ENCODE measurements at regions of chr2 and their contacts with region 1.

Region 1: GRCh38 chr2:158936978-158937377 is 31.5 kb upstream of the TANC1 start:
- DNase-seq: peak; percentile 99
- H3K4me3 ChIP-seq: no peak overlapping the region
- H3K27ac ChIP-seq: peak overlapping the region; percentile 87
- H3K4me1 ChIP-seq: peaks cover 18% of the 10 kb centered on the region
- H3K27me3 ChIP-seq: no peaks in the 10 kb centered on the region
- CTCF ChIP-seq: no peak
- POLR2A ChIP-seq: no peak

Region 2: DNA sequence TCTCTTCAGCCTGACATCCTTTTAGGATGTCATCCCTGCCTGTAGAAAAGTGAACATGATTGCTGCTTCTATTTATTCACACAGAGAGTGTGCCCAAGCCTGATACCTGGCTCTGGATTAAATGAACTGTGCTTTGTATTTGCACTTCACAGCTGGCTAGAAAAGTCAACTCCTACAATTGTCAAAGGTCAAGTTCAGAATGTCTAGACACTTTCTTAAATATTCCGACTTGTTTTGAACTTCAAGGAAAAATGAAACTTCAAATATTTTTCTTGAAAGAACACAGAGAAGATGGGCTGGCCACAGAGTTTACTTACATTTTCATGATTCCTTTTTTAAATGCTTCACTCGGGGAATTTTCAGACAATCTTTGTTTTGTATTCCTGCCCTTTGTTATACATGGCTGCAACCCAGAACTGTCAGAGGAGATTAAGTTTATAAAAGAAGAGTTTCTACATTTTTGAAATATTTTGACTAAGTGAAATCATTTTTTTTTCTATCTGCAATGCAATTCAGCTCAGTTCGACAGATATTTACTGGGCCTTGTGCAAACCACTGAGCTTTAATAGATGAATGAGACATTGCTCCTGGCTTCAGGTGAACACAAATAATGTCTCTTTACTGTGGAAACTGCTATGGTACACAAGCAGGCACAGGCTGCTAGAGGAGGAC is 108.3 kb before region 1 on chr2:
- CTCF ChIA-PET with region 1: no interaction called
- POLR2A ChIA-PET with region 1: no interaction called
- dilution Hi-C with region 1: no loop called
- intact Hi-C with region 1: no loop called
- DNase-seq: peak; percentile 11
- H3K4me3 ChIP-seq: no peak overlapping the region
- H3K27ac ChIP-seq: no peak overlapping the region
- H3K4me1 ChIP-seq: no peaks in the 10 kb centered on the region
- H3K27me3 ChIP-seq: peaks cover 0 to 2% of the 10 kb centered on the region in 2 experiments
- CTCF ChIP-seq: no peak
- POLR2A ChIP-seq: no peak

Region 3: GRCh38 chr2:158953926-158954763 is 17.2 kb after region 1 on chr2:
- CTCF ChIA-PET with region 1: interaction called, 3 read pairs
- POLR2A ChIA-PET with region 1: no interaction called
- dilution Hi-C with region 1: no loop called
- intact Hi-C with region 1: loop called (anchors 1 kb)
- DNase-seq: peak; percentile 91
- H3K4me3 ChIP-seq: no peak overlapping the region
- H3K27ac ChIP-seq: peak overlapping the region; percentile 60
- H3K4me1 ChIP-seq: peaks cover 14% of the 10 kb centered on the region
- H3K27me3 ChIP-seq: no peaks in the 10 kb centered on the region
- CTCF ChIP-seq: no peak
- POLR2A ChIP-seq: no peak

Measured in endothelial cell of umbilical vein (primary cell).